ENCODE measurements at regions of chr1 and their contacts with region 1.

Region 1: GRCh38 chr1:198187973-198188588 is 31.3 kb downstream of the NEK7 start:
- DNase-seq: peak in 1 of 2 donors; percentile 74
- ATAC-seq: peak; percentile 80 to 87 (median 84)
- H3K4me3 ChIP-seq: no peak overlapping the region
- H3K4me3 Mint-ChIP-seq: peak overlapping the region; percentile 70
- H3K27ac ChIP-seq: peak overlapping the region; percentile 65
- H3K27ac Mint-ChIP-seq: peak overlapping the region; percentile 59 to 83
- H3K4me1 ChIP-seq: peaks cover 15% of the 10 kb centered on the region
- H3K4me1 Mint-ChIP-seq: peaks cover 57 to 62% of the 10 kb centered on the region in 2 donors
- H3K27me3 ChIP-seq: no peaks in the 10 kb centered on the region
- H3K27me3 Mint-ChIP-seq: no peaks in the 10 kb centered on the region
- CTCF ChIP-seq: no peak

Region 2: DNA sequence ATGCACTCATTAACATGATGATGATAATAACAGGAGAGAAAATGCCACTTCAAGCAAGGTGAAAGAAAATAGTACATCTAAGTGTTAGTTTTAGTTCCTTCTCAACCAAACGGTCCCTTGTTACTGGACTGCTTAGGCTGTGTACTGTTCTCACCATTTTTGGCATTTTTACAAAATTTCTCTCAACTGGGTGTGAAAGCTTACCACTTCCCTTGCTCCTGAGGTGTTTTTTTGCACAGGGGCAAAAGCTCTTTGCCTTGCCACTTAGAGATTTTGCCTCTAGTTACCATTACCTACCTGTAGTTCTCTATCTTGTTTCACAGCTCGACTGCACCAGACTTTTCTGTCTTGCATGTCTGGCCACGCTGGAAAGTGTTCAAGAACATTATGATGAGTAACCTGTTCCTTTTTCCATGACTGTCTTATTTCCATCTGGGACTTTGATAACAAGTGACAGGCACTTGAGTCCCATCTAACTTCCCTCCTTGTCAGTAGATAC is 20.6 kb before region 1 on chr1:
- intact Hi-C with region 1: loop called (anchors 2 kb)
- DNase-seq: peak; percentile 37 to 80
- ATAC-seq: peak; percentile 79 to 92 (median 91)
- H3K4me3 ChIP-seq: no peak overlapping the region
- H3K4me3 Mint-ChIP-seq: peak overlapping the region; percentile 88
- H3K27ac ChIP-seq: peak overlapping the region; percentile 81
- H3K27ac Mint-ChIP-seq: peak overlapping the region; percentile 94 to 96
- H3K4me1 ChIP-seq: peaks cover 50% of the 10 kb centered on the region
- H3K4me1 Mint-ChIP-seq: peaks cover 72% of the 10 kb centered on the region in 2 donors
- H3K27me3 ChIP-seq: no peaks in the 10 kb centered on the region
- H3K27me3 Mint-ChIP-seq: no peaks in the 10 kb centered on the region
- CTCF ChIP-seq: no peak